HepG2 (cell line): ENCODE measurements at regions of chr9 and their contacts with region 1.

Region 1: DNA sequence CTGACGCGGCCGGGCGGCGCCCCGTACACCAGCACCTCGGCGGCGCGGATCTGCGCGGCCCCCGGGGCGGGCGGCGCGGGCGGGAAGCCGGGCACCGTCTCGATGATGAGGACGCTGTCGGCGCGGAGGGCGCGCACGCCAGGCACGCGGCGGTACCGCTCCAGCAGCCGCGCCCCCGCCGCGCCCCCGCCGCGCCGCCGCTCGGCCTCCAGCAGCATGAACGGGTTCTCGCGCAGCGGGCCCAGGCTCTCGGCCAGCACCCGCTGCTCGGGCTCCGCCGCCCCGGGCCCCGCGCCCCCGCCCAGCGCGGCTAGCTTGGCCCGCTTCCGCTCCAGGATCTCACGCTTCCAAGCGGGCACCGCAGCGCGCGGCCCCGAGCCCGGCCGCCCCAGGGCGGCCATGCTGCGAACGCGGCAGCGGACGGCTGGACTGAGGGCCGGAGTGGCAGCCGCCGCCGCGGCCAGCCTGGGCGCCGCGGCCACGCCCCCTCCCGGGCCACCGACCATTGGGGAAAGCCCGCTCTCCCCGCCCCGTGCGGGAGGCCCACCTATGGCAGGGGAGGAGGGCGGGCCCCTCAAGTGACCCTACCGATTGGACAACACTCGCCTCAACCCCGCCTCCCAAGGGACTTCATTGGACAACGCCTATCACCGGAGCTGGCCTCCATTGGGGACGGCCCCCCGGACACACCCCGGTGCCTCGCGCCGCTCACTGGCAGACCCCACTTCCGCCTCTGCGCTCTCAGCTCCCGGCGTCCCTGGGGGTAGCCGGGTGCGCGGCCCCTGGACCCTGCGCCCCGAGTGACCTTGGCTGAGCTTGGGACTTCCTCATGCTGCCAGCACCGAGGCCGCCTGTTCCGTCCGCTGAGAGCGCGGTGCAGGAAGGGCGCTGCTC is at the start of gene TPRN:
- DNase-seq: peak; percentile 99
- ATAC-seq: peak; percentile 87
- H3K4me3 ChIP-seq: peak within 1 kb of the TSS; percentile 71 to 78 (median 72)
- H3K27ac ChIP-seq: peak within 1 kb of the TSS; percentile 96
- H3K4me1 ChIP-seq: peaks cover 71% of the 10 kb centered on the region
- H3K27me3 ChIP-seq: no peaks in the 10 kb centered on the region; a peak in 1 of 5 replicates
- CTCF ChIP-seq: no peak
- EP300 ChIP-seq: 0 out of 4 replicates have a peak, but pooled peaks of 1 of the 2 experiments have one; percentile 15
- POLR2A ChIP-seq: peak in 1 of 2 experiments; percentile 77; a peak in 2 of 4 replicates
- RAD21 ChIP-seq: no peak; the same call in 1 of the 2 replicates
- total RNA-seq, gene TPRN: 17.5 and 19.2 TPM in 2 replicates

Region 2: DNA sequence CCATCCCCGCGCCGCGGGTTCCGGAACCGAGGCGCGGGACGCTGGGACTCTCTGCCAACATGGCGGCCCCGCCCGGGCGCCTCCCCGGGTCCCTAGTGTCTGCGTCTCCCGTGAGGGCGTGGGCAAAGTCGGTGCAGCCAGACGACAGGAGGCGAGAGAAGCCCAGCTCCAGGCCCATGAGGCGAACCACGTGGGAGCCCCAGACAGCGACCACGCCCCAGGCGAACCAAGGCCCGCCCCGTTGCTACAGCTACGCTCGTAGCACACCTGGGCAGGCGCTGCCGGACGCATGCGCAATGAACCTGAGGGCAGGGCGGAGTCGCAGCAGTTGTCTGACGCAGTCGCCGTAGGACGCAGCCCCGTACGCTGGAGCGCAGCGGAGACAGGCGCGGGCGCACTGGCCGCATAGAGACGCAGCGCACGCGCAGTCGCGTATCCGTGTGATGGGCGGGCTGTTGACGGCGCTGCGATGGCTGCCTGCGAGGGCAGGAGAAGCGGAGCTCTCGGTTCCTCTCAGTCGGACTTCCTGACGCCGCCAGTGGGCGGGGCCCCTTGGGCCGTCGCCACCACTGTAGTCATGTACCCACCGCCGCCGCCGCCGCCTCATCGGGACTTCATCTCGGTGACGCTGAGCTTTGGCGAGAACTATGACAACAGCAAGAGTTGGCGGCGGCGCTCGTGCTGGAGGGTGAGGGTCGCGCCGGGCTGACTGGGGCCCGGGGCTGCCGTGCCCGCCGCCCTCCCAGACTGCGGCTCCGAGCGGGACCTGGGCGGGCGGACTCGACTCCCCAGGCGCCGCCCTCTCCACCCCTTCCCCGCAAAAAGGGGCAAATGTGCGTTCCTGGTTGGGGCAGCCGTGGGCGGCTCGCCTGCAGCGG is 113.8 kb before region 1 on chr9 and contains the start of gene MAN1B1:
- CTCF ChIA-PET with region 1: no interaction called
- POLR2A ChIA-PET with region 1: interaction called, 14 read pairs
- in situ Hi-C with region 1: no loop called
- intact Hi-C with region 1: no loop called
- DNase-seq: peak; percentile 97
- ATAC-seq: peak; percentile 87
- H3K4me3 ChIP-seq: peak within 1 kb of the TSS; percentile 77 to 89 (median 79)
- H3K27ac ChIP-seq: peak within 1 kb of the TSS; percentile 83
- H3K4me1 ChIP-seq: peaks cover 59% of the 10 kb centered on the region
- H3K27me3 ChIP-seq: no peaks in the 10 kb centered on the region; a peak in 1 of 5 replicates
- CTCF ChIP-seq: peak; percentile 45
- EP300 ChIP-seq: no peak
- POLR2A ChIP-seq: peak in 1 of 2 experiments; percentile 65; a peak in 2 of 4 replicates
- RAD21 ChIP-seq: peak; percentile 53; the same call in 1 of the 2 replicates
- total RNA-seq, gene MAN1B1: 19.0 and 48.9 TPM in 2 replicates

Region 3: GRCh38 chr9:137150617-137151457 is 49.7 kb before region 1 on chr9:
- CTCF ChIA-PET with region 1: no interaction called
- POLR2A ChIA-PET with region 1: interaction called, 19 read pairs
- in situ Hi-C with region 1: no loop called
- intact Hi-C with region 1: no loop called
- DNase-seq: peak; percentile 84
- ATAC-seq: peak; percentile 19
- H3K4me3 ChIP-seq: no peak overlapping the region
- H3K27ac ChIP-seq: no peak overlapping the region
- H3K4me1 ChIP-seq: peaks cover 30% of the 10 kb centered on the region
- H3K27me3 ChIP-seq: peaks cover 8 to 38% of the 10 kb centered on the region in 2 experiments; a peak in 4 of 5 replicates
- CTCF ChIP-seq: no peak
- EP300 ChIP-seq: no peak
- POLR2A ChIP-seq: no peak
- RAD21 ChIP-seq: no peak

Region 4: GRCh38 chr9:137217276-137218211 is 17.0 kb after region 1 on chr9:
- CTCF ChIA-PET with region 1: no interaction called
- POLR2A ChIA-PET with region 1: interaction called, 225 read pairs
- in situ Hi-C with region 1: no loop called
- intact Hi-C with region 1: loop called (anchors 2 kb)
- DNase-seq: peak; percentile 66
- ATAC-seq: peak; percentile 69
- H3K4me3 ChIP-seq: peak overlapping the region; percentile 68 to 83 (median 77)
- H3K27ac ChIP-seq: peak overlapping the region; percentile 84
- H3K4me1 ChIP-seq: peaks cover 29% of the 10 kb centered on the region
- H3K27me3 ChIP-seq: no peaks in the 10 kb centered on the region
- CTCF ChIP-seq: peak; percentile 50
- EP300 ChIP-seq: no peak
- POLR2A ChIP-seq: no peak; a peak in 1 of 4 replicates
- RAD21 ChIP-seq: 0 out of 2 replicates have a peak, but pooled peaks have one; percentile 11

Region 5: DNA sequence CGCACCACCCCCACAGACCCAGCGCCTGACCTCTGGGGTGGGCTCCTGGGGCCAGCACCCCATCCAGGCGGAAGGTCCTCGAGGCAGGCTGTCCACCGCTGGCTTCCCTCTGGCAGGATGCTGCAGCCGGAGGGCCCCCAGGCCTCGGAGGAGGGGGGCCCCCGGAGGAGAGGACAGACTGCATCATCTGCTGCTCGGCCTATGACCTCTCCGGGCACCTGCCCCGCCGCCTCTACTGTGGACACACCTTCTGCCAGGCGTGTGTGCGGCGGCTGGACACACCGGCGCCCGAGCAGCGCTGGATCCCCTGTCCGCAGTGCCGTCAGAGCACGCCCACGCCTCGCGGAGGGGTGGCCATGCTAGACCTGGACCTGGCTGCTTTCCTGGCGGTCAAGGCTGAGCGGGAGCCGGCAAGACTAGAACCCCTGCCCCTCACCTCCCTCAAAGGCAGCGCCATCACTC is 28.0 kb after region 1 on chr9:
- CTCF ChIA-PET with region 1: no interaction called
- POLR2A ChIA-PET with region 1: interaction called, 225 read pairs
- in situ Hi-C with region 1: no loop called
- intact Hi-C with region 1: loop called (anchors 2 kb)
- DNase-seq: no peak
- ATAC-seq: peak; percentile 5
- H3K4me3 ChIP-seq: peak overlapping the region; percentile 53 to 72 (median 62); a peak in 5 of 6 replicates
- H3K27ac ChIP-seq: no peak overlapping the region
- H3K4me1 ChIP-seq: peaks cover 77% of the 10 kb centered on the region
- H3K27me3 ChIP-seq: no peaks in the 10 kb centered on the region
- CTCF ChIP-seq: no peak
- EP300 ChIP-seq: no peak
- POLR2A ChIP-seq: no peak
- RAD21 ChIP-seq: no peak

Region 6: DNA sequence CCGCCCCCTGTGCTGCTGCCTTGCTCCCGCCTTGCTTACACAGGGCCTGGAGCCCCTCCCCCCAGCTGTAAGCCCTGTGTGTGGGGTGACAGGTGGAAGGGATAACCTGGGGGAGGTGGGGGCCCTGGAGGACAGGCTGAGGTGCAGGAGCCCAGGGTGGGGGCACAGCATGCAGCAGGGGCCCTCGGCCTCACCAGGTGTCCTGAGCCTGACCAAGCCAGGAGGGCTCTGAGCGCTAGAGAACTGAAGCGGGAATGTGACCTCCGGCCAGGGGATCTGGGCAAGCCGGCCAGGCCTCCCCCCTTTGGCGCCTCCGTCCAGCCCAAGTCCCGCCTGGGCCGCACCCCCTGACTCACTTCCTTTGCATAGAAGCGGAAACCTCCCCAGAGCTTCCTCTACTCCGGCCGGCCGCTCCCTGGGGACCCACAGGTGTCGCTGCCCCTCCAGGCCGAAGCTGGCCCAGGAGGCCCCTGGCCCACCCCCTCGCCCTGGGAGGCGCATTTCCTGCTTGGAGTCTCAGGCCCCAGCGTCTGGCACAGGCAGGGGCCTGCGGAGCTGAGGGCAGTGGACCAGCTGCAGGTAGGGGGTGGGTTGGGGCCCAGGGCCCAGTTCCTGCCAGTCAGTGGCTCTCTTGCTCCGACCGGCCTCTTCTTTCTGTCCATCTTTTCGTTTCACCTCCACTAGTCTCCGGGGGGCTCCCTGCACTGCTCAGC is 76.9 kb after region 1 on chr9 and contains the start of gene TOR4A:
- CTCF ChIA-PET with region 1: no interaction called
- POLR2A ChIA-PET with region 1: interaction called, 10 read pairs
- in situ Hi-C with region 1: no loop called
- intact Hi-C with region 1: no loop called
- DNase-seq: peak; percentile 94
- ATAC-seq: peak; percentile 87
- H3K4me3 ChIP-seq: peak within 1 kb of the TSS; percentile 87 to 90 (median 88)
- H3K27ac ChIP-seq: peak within 1 kb of the TSS; percentile 90
- H3K4me1 ChIP-seq: peaks cover 21% of the 10 kb centered on the region
- H3K27me3 ChIP-seq: no peaks in the 10 kb centered on the region; a peak in 1 of 5 replicates
- CTCF ChIP-seq: peak; percentile 83
- EP300 ChIP-seq: peak; percentile 20 to 39; a peak in 2 of 4 replicates
- POLR2A ChIP-seq: peak in 1 of 2 experiments; percentile 85; a peak in 2 of 4 replicates
- RAD21 ChIP-seq: peak; percentile 62
- total RNA-seq, gene TOR4A: 7.0 and 14.2 TPM in 2 replicates